Activated T-helper 1 cell treated with anti-CD3 and anti-CD28 coated beads, Interleukin-12 subunit alpha, Interleukin-12 subunit beta, Interleukin-2, Interleukin-4 antibody, amounts not matched to agents 30 ng/mL and 10 ng/mL and 1 ng/mL, durations not matched to agents 14 hours and 24 hours and 36 hours (primary cell): ENCODE measurements at regions of chr1 and their contacts with region 1.

Region 1: GRCh38 chr1:32291708-32292492 is at the start of gene HDAC1:
- DNase-seq: peak; percentile 96
- H3K4me3 Mint-ChIP-seq: peak within 1 kb of the TSS; percentile 93
- H3K27ac Mint-ChIP-seq: peak within 1 kb of the TSS; percentile 94
- H3K4me1 Mint-ChIP-seq: peaks cover 37% of the 10 kb centered on the region
- H3K27me3 Mint-ChIP-seq: no peaks in the 10 kb centered on the region
- total RNA-seq, gene HDAC1: 177 and 179 TPM in 2 replicates

Region 2: GRCh38 chr1:32107742-32108661 is 183.9 kb before region 1 on chr1 and contains the start of gene KPNA6:
- intact Hi-C with region 1: loop called (anchors 1 kb)
- DNase-seq: peak; percentile 89
- H3K4me3 Mint-ChIP-seq: peak within 1 kb of the TSS; percentile 98
- H3K27ac Mint-ChIP-seq: peak within 1 kb of the TSS; percentile 94
- H3K4me1 Mint-ChIP-seq: peaks cover 43% of the 10 kb centered on the region
- H3K27me3 Mint-ChIP-seq: no peaks in the 10 kb centered on the region
- total RNA-seq, gene KPNA6: 76.7 and 78.6 TPM in 2 replicates

Region 3: GRCh38 chr1:32205401-32206370 is 86.2 kb before region 1 on chr1 and contains the start of gene IQCC:
- intact Hi-C with region 1: loop called (anchors 1 kb)
- DNase-seq: peak; percentile 83
- H3K4me3 Mint-ChIP-seq: peak within 1 kb of the TSS; percentile 90
- H3K27ac Mint-ChIP-seq: peak within 1 kb of the TSS; percentile 80
- H3K4me1 Mint-ChIP-seq: peaks cover 38% of the 10 kb centered on the region
- H3K27me3 Mint-ChIP-seq: no peaks in the 10 kb centered on the region
- total RNA-seq, gene IQCC: 5.7 and 6.0 TPM in 2 replicates

Region 4: GRCh38 chr1:32240140-32240951 is 51.6 kb before region 1 on chr1:
- intact Hi-C with region 1: loop called (anchors 2 kb)
- DNase-seq: no peak
- H3K4me3 Mint-ChIP-seq: peak overlapping the region; percentile 82
- H3K27ac Mint-ChIP-seq: no peak overlapping the region
- H3K4me1 Mint-ChIP-seq: peaks cover 17% of the 10 kb centered on the region
- H3K27me3 Mint-ChIP-seq: no peaks in the 10 kb centered on the region

Region 5: GRCh38 chr1:32273388-32274208 is 18.3 kb before region 1 on chr1:
- intact Hi-C with region 1: loop called (anchors 2 kb)
- DNase-seq: peak; percentile 57
- H3K4me3 Mint-ChIP-seq: peak overlapping the region; percentile 67
- H3K27ac Mint-ChIP-seq: peak overlapping the region; percentile 89
- H3K4me1 Mint-ChIP-seq: peaks cover 42% of the 10 kb centered on the region
- H3K27me3 Mint-ChIP-seq: no peaks in the 10 kb centered on the region

Region 6: DNA sequence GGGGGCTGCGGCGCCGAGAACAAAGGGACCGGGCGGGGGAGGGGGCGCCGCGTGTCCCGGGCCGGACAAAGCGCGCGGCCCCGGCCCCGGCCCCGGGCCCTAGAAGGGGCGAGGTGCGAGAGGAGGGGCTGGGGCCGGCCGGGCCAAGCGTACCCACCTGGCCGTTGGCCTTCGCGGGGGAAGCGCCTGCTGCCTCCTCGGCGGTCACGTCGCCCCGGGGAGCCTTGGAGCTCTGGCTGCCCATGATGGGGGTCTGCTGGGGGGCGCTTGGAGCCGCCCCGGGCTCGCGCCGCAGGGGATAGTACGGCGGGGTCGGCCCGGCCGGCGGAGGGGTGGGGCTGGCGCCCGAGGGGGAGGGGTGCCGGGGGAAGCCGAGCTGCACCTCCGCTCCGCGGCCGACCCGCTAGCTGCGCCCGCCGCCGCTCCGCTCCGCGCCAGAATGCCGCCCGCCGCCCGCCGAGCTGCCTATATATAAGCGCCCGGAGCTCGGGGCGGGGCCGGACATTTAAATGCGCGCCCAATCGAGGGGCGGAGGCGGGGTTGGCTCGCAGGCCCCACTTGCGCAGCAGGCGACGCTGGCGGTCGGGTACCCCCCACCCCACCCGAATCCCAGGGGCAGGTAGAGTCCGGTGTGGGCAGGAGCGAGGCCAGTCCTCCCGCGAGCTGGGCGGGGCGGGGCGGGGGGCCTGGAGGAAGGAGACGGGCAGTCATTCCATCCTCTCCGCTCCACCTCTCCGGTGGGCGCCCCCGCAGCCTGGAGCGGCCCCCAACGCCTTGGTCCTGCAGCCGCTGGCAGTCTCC is 44.1 kb after region 1 on chr1 and contains the start of gene MARCKSL1:
- intact Hi-C with region 1: loop called (anchors 1 kb)
- DNase-seq: peak; percentile 80
- H3K4me3 Mint-ChIP-seq: peak within 1 kb of the TSS; percentile 88
- H3K27ac Mint-ChIP-seq: peak within 1 kb of the TSS; percentile 67
- H3K4me1 Mint-ChIP-seq: peaks cover 52% of the 10 kb centered on the region
- H3K27me3 Mint-ChIP-seq: no peaks in the 10 kb centered on the region
- total RNA-seq, gene MARCKSL1: 31.6 and 31.8 TPM in 2 replicates

Region 7: GRCh38 chr1:32394141-32394889 is 102.4 kb after region 1 on chr1 and contains the start of gene BSDC1:
- intact Hi-C with region 1: loop called (anchors 1 kb)
- DNase-seq: peak; percentile 98
- H3K4me3 Mint-ChIP-seq: peak within 1 kb of the TSS; percentile 97
- H3K27ac Mint-ChIP-seq: peak within 1 kb of the TSS; percentile 99
- H3K4me1 Mint-ChIP-seq: peaks cover 16% of the 10 kb centered on the region
- H3K27me3 Mint-ChIP-seq: peaks cover 7% of the 10 kb centered on the region
- total RNA-seq, gene BSDC1: 48.8 and 50.3 TPM in 2 replicates